AG04450 (cell line): ENCODE measurements at regions of chr6 and their contacts with region 1.

Region 1: DNA sequence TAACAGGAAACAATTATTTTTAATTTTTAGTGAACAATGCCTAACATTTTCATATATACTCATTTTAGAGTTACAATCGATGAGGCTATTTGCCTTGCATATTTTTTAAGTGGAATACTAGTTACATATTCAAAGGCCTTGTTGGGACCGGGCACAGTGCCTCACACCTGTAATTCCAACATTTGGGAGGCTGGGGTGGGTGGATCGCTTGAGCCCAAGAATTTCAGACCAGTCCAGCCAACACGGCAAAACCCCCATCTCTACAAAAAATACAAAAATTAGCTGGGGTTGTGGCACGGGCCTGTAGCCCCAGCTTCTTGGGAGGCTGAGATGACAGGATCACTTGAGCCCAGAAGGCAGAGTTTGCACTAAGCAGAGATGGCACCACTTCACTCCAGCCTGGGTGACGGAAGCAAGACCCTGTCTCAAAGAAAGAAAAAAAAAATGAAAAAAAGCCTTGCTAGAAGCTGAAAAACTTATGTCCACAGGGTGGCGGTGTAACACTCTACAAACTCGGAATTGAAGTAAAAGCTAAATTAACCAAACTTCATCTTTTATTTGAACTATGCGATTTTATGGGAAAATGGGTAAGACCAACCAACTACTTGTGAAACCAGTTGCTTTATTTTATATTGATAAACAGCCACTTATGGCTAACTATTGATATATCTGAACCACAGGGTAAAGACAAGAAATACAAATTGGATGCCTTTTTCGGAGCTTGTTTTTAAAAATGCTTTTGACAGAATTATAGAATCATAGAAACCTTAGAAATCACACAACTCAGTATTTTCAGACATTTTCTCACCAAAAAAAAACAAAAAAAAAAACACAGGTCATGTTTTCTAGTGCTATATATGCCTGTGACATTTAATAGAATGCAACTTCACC is 24.1 kb upstream of the ROS1 start:
- DNase-seq: peak; percentile 63
- H3K4me3 ChIP-seq: no peak overlapping the region
- H3K27ac ChIP-seq: no peak overlapping the region
- H3K27me3 ChIP-seq: no peaks in the 10 kb centered on the region
- CTCF ChIP-seq: peak; percentile 68

Region 2: DNA sequence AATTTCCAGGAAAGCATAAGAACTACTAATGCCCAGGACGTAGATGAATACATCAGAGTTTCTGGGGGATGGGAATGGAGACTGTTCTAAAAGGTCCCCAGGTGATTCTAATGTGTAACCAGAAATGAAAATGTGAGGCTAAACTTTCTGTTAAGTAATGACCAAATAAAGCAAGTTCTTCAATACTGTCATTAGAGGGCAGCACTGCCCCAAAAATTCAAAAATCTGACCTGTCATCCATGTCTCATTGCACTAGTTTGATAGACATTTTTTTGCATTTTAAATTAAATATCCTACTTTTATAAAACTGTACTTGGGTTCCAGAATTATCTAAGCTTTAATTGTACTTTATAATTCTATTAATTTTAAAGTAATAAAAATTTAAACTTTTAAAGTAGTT is 477.8 kb before region 1 on chr6:
- CTCF ChIA-PET with region 1: no interaction called
- POLR2A ChIA-PET with region 1: no interaction called
- DNase-seq: no peak
- H3K4me3 ChIP-seq: no peak overlapping the region
- H3K27ac ChIP-seq: no peak overlapping the region
- H3K27me3 ChIP-seq: no peaks in the 10 kb centered on the region
- CTCF ChIP-seq: peak; percentile 67

Region 3: GRCh38 chr6:117399924-117400323 is 49.9 kb before region 1 on chr6:
- CTCF ChIA-PET with region 1: interaction called, 16 read pairs
- POLR2A ChIA-PET with region 1: no interaction called
- DNase-seq: no peak
- H3K4me3 ChIP-seq: no peak overlapping the region
- H3K27ac ChIP-seq: no peak overlapping the region
- H3K27me3 ChIP-seq: peaks cover 2% of the 10 kb centered on the region
- CTCF ChIP-seq: peak; percentile 52

Region 4: DNA sequence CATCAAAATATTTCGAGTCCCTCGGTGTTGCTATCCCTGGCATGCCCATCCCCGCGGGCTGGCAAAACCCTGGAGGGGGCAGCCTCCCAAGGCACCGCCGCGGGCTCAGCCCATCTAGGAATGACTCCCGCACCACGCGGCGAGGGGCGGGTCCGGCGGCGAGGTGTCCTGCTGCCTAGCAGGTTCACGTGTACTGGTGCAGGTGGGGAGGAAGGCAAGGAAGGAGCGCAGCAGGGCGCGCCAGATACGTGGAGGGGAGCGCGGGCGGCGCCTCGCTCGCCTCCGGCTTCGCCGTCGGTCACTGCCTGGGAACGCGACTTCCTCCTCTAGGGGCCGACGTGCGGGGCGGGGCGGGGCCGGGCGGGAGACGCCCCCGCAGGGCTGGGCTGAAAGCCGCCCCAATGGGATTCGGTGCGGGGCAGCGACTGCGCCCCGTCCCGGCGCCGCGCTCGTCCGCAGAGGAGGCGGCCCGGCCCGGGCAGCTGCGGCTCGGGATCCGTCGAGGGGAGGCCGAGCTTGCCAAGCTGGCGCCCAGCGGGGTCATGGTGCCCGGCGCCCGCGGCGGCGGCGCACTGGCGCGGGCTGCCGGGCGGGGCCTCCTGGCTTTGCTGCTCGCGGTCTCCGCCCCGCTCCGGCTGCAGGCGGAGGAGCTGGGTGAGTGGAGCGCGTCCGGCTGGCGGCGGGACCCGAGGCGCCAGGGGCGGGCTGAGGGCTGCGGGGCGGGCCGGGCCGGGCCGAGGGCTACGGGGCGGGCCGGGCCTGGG is 32.6 kb after region 1 on chr6 and contains the start of gene DCBLD1:
- CTCF ChIA-PET with region 1: interaction called, 14 read pairs
- POLR2A ChIA-PET with region 1: interaction called, 5 read pairs
- DNase-seq: no peak
- H3K4me3 ChIP-seq: peak within 1 kb of the TSS; percentile 80
- H3K27ac ChIP-seq: peak within 1 kb of the TSS; percentile 53
- H3K27me3 ChIP-seq: no peaks in the 10 kb centered on the region
- CTCF ChIP-seq: no peak
- polyA plus RNA-seq, gene DCBLD1: 14.9 and 19.0 TPM in 2 replicates

Region 5: DNA sequence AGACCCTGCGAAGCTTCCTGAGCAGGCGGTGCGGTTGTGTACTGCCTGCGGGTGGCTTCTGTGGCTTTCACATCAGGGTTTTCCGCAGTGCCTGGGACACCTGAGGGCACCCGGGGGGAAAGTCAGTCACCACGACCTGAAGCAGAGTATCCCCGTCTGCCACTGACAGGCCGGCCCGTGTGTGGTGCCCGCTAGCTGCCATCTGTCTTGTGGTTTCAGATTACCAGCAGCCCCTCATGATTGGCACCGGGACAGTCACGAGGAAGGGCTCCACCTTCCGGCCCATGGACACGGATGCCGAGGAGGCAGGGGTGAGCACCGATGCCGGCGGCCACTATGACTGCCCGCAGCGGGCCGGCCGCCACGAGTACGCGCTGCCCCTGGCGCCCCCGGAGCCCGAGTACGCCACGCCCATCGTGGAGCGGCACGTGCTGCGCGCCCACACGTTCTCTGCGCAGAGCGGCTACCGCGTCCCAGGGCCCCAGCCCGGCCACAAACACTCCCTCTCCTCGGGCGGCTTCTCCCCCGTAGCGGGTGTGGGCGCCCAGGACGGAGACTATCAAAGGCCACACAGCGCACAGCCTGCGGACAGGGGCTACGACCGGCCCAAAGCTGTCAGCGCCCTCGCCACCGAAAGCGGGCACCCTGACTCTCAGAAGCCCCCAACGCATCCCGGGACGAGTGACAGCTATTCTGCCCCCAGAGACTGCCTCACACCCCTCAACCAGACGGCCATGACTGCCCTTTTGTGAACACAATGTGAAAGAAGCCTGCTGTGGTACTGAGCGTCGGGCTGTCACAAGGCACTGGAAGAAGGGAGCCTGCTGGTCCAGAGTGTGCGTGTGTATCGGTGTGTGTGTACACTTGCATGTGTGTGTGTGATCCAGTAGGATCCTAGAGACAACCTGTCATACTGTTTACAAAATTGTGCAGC is 98.2 kb after region 1 on chr6:
- CTCF ChIA-PET with region 1: interaction called, 85 read pairs
- POLR2A ChIA-PET with region 1: no interaction called
- DNase-seq: no peak
- H3K4me3 ChIP-seq: peak overlapping the region; percentile 30
- H3K27ac ChIP-seq: peak overlapping the region; percentile 83
- H3K27me3 ChIP-seq: no peaks in the 10 kb centered on the region
- CTCF ChIP-seq: no peak

Region 6: DNA sequence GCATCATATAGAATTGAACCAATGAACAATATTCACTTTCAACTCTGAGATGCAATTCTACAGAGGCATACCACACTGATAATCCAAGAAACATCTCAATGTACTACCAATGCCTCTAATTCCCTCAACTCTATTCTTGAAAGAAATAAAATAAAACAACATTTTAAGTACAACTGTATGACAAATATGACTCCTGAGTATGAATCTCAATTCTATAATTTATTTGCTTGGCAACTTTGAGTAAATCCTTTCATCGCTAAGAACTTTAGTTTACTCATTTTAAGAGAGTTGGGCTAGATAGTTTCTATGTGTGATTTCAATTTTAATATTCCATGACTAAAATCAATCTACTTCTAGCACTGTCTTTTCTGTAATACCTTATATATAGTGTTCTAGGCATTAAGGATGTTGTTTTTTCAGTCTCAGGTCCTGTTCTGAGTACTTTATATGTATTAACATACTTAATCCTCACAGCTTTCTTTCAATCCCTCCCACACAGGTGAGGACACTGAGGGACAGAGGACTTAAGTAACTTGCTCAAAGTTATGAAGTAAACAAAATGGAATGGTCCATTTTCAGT is 119.1 kb after region 1 on chr6:
- CTCF ChIA-PET with region 1: interaction called, 38 read pairs
- POLR2A ChIA-PET with region 1: no interaction called
- DNase-seq: no peak
- H3K4me3 ChIP-seq: no peak overlapping the region
- H3K27ac ChIP-seq: no peak overlapping the region
- H3K27me3 ChIP-seq: no peaks in the 10 kb centered on the region
- CTCF ChIP-seq: no peak

Region 7: GRCh38 chr6:117602151-117602898 is 152.5 kb after region 1 on chr6 and contains the start of gene GOPC:
- CTCF ChIA-PET with region 1: interaction called, 97 read pairs
- POLR2A ChIA-PET with region 1: interaction called, 18 read pairs
- DNase-seq: peak; percentile 96
- H3K4me3 ChIP-seq: peak within 1 kb of the TSS; percentile 93
- H3K27ac ChIP-seq: peak within 1 kb of the TSS; percentile 92
- H3K27me3 ChIP-seq: no peaks in the 10 kb centered on the region
- CTCF ChIP-seq: peak; percentile 33
- polyA plus RNA-seq, gene GOPC: 25.0 and 37.8 TPM in 2 replicates